Heart left ventricle (tissue), 16 donors: ENCODE measurements at regions of chr5 and their contacts with region 1.

Region 1: DNA sequence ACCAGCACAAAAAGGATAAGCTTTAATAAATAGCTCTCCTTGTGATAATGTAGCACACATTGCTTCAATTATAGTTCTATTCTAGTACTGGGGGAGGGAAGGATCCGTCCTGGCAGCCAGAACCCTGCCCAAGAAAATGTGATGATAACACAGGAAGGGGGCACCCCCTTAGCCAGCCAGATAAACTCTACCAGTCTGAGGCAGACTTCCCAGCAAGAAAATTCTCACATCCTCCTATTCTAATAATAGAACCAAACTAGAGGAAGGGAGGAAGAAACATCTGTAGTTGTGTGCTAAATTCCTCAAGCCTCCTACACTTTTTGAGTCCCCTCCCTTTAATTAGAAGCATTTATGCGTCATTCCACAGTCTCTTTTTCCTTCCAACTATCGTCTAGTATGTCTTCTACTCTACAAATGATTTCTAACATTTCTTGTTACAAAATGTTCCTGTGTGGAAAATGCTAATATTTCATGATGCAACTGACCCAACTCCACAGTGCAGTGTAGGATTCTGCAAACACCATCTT is 261.0 kb downstream of the SEMA5A start:
- DNase-seq: peak in 4 of 5 donors; percentile 46 to 65 (median 52)
- ATAC-seq: peak; percentile 84 to 93 (median 90)
- H3K4me3 ChIP-seq: no peak overlapping the region
- H3K27ac ChIP-seq: peak overlapping the region; percentile 21 to 77 (median 60)
- H3K4me1 ChIP-seq: peaks cover 0 to 36% (median 15%) of the 10 kb centered on the region in 12 donors
- H3K27me3 ChIP-seq: no peaks in the 10 kb centered on the region
- CTCF ChIP-seq: no peak
- POLR2A ChIP-seq: no peak

Region 2: DNA sequence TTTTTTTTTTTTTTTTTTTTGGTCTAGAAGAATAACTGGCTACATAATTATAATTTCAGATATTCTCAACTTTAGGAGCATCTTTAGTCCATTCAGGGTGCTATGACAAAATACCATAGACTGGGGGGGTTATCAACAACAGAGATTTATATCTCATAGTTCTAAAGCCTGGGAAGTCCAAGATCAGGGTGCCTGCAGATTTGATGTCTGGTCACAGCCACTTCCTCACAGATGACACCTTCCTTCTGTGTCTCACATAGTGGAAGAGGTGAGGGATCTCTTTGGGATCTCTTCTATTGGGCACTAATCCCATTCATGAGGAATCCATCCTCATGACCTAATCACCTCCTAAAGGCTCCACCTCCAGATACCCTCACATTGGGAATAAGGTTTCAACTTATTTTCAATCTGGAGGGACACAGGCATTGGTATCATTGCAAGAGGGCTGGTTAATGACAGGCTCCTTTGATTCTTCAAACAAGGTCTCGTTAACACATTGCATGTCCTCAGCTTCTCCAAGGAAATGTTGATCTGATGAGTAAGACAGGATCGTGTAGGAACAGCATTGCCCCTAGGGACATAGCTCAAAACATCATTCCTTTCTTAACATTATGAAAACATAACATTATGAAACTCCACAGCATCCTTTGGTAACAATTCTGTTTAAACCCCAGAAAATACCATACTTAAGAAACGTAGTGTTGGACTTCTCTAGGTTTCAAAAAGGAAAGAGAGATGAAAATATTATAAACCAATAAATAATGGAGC is 111.4 kb before region 1 on chr5:
- intact Hi-C with region 1: no loop called
- DNase-seq: no peak
- ATAC-seq: peak in 1 of 4 donors; percentile 45
- H3K4me3 ChIP-seq: no peak overlapping the region
- H3K27ac ChIP-seq: peak overlapping the region in 1 of 12 donors; percentile 52
- H3K4me1 ChIP-seq: peaks cover 0 to 9% (median 0%) of the 10 kb centered on the region in 12 donors
- H3K27me3 ChIP-seq: no peaks in the 10 kb centered on the region
- CTCF ChIP-seq: no peak
- POLR2A ChIP-seq: no peak

Region 3: GRCh38 chr5:9197881-9198260 is 87.0 kb before region 1 on chr5:
- intact Hi-C with region 1: no loop called
- DNase-seq: no peak
- ATAC-seq: no peak
- H3K4me3 ChIP-seq: no peak overlapping the region
- H3K27ac ChIP-seq: no peak overlapping the region
- H3K4me1 ChIP-seq: peaks cover 0 to 9% (median 0%) of the 10 kb centered on the region in 12 donors
- H3K27me3 ChIP-seq: no peaks in the 10 kb centered on the region
- CTCF ChIP-seq: no peak
- POLR2A ChIP-seq: no peak

Region 4: DNA sequence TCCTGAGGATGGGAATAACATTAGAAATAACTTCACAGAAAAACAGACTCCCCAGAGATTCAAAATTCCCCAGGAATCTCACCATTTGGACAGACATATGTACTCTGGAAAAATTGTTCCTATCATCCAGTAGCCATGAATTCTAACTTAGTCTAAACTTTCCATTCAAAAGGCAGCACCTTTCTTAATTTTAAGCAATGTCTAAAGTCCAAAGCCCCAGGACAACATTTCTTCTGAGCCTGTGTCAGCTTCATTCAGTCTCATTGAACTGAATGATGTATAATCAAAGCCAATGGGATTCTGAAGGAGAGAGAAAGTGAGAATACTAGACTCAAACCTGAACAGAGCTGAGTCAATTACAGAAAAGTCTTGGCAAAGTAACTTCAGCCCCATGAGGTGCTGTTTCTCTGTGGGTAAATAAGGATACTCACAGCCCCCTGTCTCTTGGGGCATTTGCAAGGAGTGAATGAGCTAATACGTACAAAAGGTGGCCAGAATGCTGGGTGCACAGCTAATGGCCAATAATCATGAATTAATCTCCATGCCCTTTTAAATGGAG is 120.4 kb after region 1 on chr5:
- intact Hi-C with region 1: no loop called
- DNase-seq: no peak
- ATAC-seq: no peak
- H3K4me3 ChIP-seq: no peak overlapping the region
- H3K27ac ChIP-seq: no peak overlapping the region
- H3K4me1 ChIP-seq: peaks cover 0 to 4% (median 0%) of the 10 kb centered on the region in 12 donors
- H3K27me3 ChIP-seq: no peaks in the 10 kb centered on the region
- CTCF ChIP-seq: no peak
- POLR2A ChIP-seq: no peak

Region 5: GRCh38 chr5:9507974-9508373 is 223.1 kb after region 1 on chr5:
- intact Hi-C with region 1: loop called in 1 of 10 experiments (anchors 10 kb)
- DNase-seq: no peak
- ATAC-seq: no peak
- H3K4me3 ChIP-seq: no peak overlapping the region
- H3K27ac ChIP-seq: no peak overlapping the region
- H3K4me1 ChIP-seq: peaks cover 0 to 36% (median 7%) of the 10 kb centered on the region in 12 donors
- H3K27me3 ChIP-seq: no peaks in the 10 kb centered on the region
- CTCF ChIP-seq: no peak
- POLR2A ChIP-seq: no peak